Psoas muscle (tissue), 8 donors: ENCODE measurements at regions of chr17 and their contacts with region 1.

Region 1: DNA sequence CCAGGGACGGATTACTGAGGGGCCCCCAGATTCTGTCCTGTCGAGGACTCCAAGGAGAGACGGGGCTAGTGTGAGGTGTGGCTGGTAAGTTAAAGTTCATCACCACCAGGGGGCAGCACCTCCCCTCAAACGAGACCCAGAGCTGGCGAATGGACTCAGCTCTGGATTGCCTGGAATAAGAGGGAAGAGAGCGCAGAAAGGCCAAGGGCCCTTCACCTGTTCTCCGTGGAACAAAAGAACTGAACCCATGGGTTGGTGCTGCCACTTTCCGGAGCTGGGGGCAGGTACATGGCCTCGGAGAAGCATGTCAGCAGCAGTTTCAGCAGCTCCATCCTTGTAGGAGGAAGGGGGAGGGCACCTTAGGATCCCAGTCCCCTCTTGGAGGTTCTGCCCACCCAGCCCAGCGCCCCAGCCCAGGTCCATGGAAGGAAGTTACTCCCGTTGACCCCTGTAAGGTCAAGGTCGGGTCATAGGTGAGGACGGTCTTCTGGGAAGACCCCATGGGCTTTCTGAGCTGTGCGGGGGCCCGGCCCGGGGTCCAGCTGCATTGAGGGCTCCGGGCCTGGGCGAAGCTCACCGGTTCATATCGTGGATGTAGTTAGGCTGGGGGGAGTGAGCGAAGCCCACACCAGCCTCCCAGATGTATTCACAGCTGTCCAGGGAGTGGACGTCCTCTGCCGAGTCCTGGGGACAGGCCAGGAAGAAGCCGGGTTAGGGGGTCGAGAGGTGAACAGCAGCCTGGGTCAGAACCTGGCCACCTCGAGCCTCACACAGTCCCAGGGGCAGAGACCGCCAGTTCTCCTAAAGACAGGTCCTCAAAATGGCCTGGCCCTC is 10.7 kb downstream of the HID1 start:
- DNase-seq: peak; percentile 86 to 92
- ATAC-seq: peak; percentile 82 to 94 (median 90)
- H3K4me3 ChIP-seq: no peak overlapping the region
- H3K27ac ChIP-seq: no peak overlapping the region
- H3K4me1 ChIP-seq: no peaks in the 10 kb centered on the region
- H3K27me3 ChIP-seq: no peaks in the 10 kb centered on the region
- CTCF ChIP-seq: peak; percentile 85

Region 2: DNA sequence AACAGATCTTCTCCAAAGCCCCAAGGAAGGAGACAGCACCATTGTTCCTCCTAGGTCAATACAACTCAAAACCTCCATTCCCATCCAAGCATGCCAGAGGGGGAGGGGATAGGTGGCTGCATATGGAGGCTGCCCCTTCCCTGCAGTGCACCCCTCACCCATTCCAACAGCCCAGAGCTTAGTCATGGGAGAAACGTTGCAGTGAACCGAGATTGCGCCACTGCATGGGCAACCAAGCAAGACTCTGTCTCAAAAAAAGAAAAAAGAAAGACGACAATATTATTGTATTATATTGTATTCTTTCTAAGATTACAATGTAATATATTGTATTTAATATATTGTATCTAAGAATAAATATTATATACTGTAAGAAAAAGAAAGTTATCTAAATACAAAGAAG is 302.0 kb before region 1 on chr17:
- intact Hi-C with region 1: no loop called
- DNase-seq: no peak
- ATAC-seq: no peak
- H3K4me3 ChIP-seq: no peak overlapping the region
- H3K27ac ChIP-seq: no peak overlapping the region
- H3K4me1 ChIP-seq: no peaks in the 10 kb centered on the region
- H3K27me3 ChIP-seq: peaks cover 0 to 56% (median 5%) of the 10 kb centered on the region in 3 donors
- CTCF ChIP-seq: no peak

Region 3: GRCh38 chr17:74748529-74749365 is 213.1 kb before region 1 on chr17 and contains the start of gene NHERF1:
- intact Hi-C with region 1: loop called in 1 of 2 experiments (anchors 5 kb)
- DNase-seq: peak; percentile 96
- ATAC-seq: peak; percentile 92 to 96 (median 94)
- H3K4me3 ChIP-seq: peak within 1 kb of the TSS; percentile 80
- H3K27ac ChIP-seq: peak within 1 kb of the TSS; percentile 73
- H3K4me1 ChIP-seq: peaks cover 11% of the 10 kb centered on the region
- H3K27me3 ChIP-seq: peaks cover 0 to 11% (median 1%) of the 10 kb centered on the region in 3 donors
- CTCF ChIP-seq: no peak
- total RNA-seq, gene NHERF1: 3.9 to 16.6 (median 4.9) TPM

Region 4: GRCh38 chr17:74904687-74905409 is 57.0 kb before region 1 on chr17:
- intact Hi-C with region 1: loop called in 1 of 2 experiments (anchors 10 kb)
- DNase-seq: no peak
- ATAC-seq: no peak
- H3K4me3 ChIP-seq: no peak overlapping the region
- H3K27ac ChIP-seq: no peak overlapping the region
- H3K4me1 ChIP-seq: no peaks in the 10 kb centered on the region
- H3K27me3 ChIP-seq: peaks cover 0 to 41% (median 10%) of the 10 kb centered on the region in 3 donors
- CTCF ChIP-seq: no peak

Region 5: GRCh38 chr17:75006653-75007052 is 44.8 kb after region 1 on chr17:
- intact Hi-C with region 1: loop called (anchors 5 kb)
- DNase-seq: peak in 1 of 2 donors; percentile 25
- ATAC-seq: no peak
- H3K4me3 ChIP-seq: no peak overlapping the region
- H3K27ac ChIP-seq: no peak overlapping the region
- H3K4me1 ChIP-seq: peaks cover 2% of the 10 kb centered on the region
- H3K27me3 ChIP-seq: no peaks in the 10 kb centered on the region
- CTCF ChIP-seq: no peak

Region 6: DNA sequence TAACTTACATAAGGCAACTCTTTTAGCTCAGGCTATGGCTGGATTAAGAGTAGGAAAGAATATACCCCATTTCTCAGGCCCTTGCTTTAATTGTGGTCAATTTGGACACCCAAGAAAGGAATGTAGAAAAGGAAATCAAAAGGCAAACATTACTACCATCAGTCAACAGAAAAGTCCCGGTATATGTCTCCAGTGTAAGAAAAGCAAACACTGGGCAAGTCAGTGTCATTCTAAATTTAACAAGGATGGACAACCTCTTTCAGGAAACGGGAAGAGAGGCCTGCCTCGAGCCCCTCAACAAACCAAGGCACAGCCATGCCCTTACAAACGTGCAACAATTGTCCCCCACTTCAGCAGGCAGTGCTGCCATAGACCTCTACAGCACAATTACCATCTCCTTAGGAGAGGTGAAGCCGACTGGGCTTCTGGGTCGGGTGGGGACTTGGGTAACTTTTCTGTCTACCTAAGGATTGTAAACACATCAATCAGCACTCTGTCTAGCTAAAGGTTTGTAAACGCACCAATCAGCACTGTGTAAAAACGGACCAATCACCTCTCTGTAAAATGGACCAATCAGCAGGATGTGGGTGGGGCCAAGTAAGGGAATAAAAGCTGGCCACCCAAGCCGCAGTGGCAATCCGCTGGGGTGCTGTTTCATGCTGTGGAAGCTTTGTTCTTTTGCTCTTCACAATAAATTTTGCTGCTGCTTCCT is 63.0 kb after region 1 on chr17:
- intact Hi-C with region 1: no loop called
- DNase-seq: no peak
- ATAC-seq: no peak
- H3K4me3 ChIP-seq: no peak overlapping the region
- H3K27ac ChIP-seq: no peak overlapping the region
- H3K4me1 ChIP-seq: no peaks in the 10 kb centered on the region
- H3K27me3 ChIP-seq: no peaks in the 10 kb centered on the region
- CTCF ChIP-seq: no peak

Region 7: GRCh38 chr17:75109407-75110233 is 147.7 kb after region 1 on chr17 and contains the start of gene ARMC7:
- intact Hi-C with region 1: loop called in 1 of 2 experiments (anchors 10 kb)
- DNase-seq: peak; percentile 88 to 96
- ATAC-seq: peak; percentile 86 to 90 (median 88)
- H3K4me3 ChIP-seq: peak within 1 kb of the TSS; percentile 88
- H3K27ac ChIP-seq: peak within 1 kb of the TSS; percentile 74
- H3K4me1 ChIP-seq: peaks cover 7% of the 10 kb centered on the region
- H3K27me3 ChIP-seq: no peaks in the 10 kb centered on the region
- CTCF ChIP-seq: no peak
- total RNA-seq, gene ARMC7: 2.7 to 7.0 (median 3.6) TPM

Region 8: DNA sequence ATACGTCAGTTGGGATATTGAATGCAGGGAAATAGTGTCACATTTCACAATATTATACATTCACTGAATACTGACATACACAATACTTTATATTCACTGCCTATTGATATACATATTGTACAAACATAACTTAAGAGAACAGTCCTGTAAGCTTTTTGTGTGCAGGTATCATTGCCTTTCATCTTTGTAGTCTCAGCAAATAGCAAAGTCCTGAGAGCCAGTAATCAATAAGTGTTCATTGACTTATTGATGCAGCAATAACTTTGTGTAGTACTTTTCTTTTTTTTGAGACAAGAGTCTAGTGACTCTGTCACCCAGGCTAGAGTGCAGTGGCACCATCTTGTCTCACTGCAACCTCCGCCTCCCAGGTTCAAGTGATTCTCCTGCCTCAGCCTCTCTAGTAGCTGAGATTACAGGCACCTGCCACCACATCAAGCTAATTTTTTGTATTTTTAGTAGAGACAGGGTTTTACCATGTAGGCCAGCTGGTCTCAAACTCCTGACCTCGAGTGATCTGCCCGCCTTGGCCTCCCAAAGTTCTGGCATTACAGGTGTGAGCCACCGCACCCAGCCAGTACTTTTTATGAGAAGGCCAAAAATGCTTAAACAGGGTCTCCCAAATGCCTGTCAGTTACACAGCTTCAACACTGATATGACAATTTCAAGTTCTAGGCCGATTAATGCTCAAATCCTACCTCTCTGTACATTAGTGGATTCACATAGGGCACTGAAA is 238.2 kb after region 1 on chr17:
- intact Hi-C with region 1: loop called in 1 of 2 experiments (anchors 5 kb)
- DNase-seq: no peak
- ATAC-seq: no peak
- H3K4me3 ChIP-seq: no peak overlapping the region
- H3K27ac ChIP-seq: no peak overlapping the region
- H3K4me1 ChIP-seq: no peaks in the 10 kb centered on the region
- H3K27me3 ChIP-seq: no peaks in the 10 kb centered on the region
- CTCF ChIP-seq: no peak